Activated naive CD4-positive, alpha-beta T cell treated with anti-CD3 and anti-CD28 coated beads for 36 hours (primary cell): ENCODE measurements at regions of chr1 and their contacts with region 1.

Region 1: DNA sequence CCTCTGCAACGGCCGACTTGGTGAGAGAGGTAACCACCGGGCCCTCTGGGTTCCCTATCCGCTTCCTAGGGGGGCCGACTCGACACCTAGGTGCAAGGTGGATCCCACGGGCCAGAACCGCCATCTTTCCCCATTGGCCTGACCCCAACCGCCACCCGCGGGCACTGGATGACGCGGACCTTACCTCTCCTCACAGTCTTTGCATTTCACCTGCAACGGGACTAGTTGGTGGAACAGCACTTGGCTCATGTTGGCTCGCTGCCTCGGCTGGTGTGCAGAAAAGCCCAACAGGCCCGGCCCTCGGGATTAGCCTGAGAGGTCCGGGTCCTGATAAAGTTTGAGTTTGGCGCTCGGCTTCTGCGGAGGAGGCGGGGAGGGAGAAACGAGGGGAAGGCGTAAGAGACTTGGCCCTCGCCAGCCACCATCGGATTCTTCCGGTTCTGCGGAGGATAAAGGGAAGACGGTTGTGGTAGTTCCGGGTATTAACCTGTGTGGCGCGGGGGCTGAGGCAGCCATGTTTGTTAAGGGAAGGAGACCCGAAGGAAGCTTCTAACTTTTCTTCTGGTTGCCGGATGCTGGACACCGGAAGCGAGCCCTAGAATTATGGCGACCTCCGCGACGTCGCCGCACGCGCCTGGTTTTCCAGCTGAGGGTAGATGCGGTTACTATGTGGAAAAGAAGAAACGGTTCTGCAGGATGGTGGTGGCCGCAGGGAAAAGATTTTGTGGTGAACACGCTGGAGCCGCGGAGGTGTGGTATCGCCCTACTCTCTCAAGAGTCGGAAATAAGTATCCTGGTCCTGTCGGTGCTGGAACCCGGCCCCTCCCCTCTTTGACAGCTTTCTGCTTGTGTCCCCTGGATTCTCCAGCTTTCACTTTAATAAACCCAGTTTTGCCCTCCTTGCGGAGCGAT is at the starts of genes SASS6 and TRMT13:
- DNase-seq: peak; percentile 97
- H3K4me3 Mint-ChIP-seq: peak within 1 kb of the TSS; percentile 91
- H3K27ac Mint-ChIP-seq: peak within 1 kb of the TSS; percentile 87
- H3K4me1 Mint-ChIP-seq: peaks cover 37% of the 10 kb centered on the region
- H3K27me3 Mint-ChIP-seq: no peaks in the 10 kb centered on the region
- total RNA-seq, gene SASS6: 8.2 TPM
- total RNA-seq, gene TRMT13: 12.9 to 16.6 TPM

Region 2: DNA sequence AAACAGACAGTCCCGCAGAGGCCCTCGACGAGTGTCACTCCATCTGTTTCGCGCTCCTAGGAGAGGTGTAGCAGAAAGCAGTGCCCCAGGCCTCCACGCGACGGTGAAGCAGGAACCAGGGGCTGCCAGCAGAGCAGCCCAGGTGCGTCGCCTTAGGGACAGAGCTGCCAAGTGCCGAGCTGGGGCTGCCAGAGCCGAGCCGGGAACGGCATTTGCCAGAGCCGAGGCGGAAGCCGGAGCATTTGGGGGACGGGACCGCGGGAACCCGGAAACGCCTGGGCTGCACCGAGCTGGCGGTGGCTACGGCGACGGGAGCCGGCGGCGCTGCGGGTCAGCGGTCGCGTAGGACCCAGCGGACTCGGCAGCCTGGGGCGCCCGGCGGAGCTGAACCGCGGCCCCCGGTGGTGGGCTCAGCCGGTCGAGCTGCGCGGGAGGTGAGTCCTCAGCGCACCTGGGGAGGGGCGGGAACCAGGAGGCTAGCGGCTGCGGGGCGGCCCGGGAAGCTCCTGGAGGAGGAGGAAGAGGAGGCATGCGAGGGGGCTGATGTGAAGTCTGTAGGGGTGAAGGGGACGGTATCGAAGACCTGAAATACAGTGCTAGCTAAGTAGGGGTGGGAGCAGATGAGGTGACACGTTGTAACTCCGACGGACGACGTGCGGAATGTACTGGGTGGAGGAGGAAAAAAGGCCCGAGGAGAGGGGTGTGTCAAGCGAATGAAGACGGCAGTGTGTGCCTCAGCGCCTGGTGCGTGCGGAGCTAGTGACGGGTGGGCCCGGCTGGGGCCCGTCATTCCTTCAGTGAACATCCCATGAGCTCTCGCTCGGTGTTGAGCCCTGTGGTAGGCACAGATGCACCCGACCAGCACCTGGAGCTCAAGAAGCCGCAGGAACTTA is 162.8 kb before region 1 on chr1 and contains the start of gene SLC35A3:
- CTCF ChIA-PET with region 1: no interaction called
- intact Hi-C with region 1: loop called (anchors 1 kb)
- DNase-seq: peak; percentile 85
- H3K4me3 Mint-ChIP-seq: peak within 1 kb of the TSS; percentile 96
- H3K27ac Mint-ChIP-seq: peak within 1 kb of the TSS; percentile 85
- H3K4me1 Mint-ChIP-seq: peaks cover 22% of the 10 kb centered on the region
- H3K27me3 Mint-ChIP-seq: no peaks in the 10 kb centered on the region
- total RNA-seq, gene SLC35A3: 13.8 to 15.5 TPM

Region 3: GRCh38 chr1:100051401-100051800 is 81.4 kb before region 1 on chr1:
- CTCF ChIA-PET with region 1: no interaction called
- intact Hi-C with region 1: loop called (anchors 2 kb)
- DNase-seq: no peak
- H3K4me3 Mint-ChIP-seq: no peak overlapping the region
- H3K27ac Mint-ChIP-seq: peak overlapping the region; percentile 66
- H3K4me1 Mint-ChIP-seq: peaks cover 59% of the 10 kb centered on the region
- H3K27me3 Mint-ChIP-seq: no peaks in the 10 kb centered on the region

Region 4: GRCh38 chr1:100328133-100328532 is 195.3 kb after region 1 on chr1:
- CTCF ChIA-PET with region 1: no interaction called
- intact Hi-C with region 1: no loop called
- DNase-seq: no peak
- H3K4me3 Mint-ChIP-seq: no peak overlapping the region
- H3K27ac Mint-ChIP-seq: no peak overlapping the region
- H3K4me1 Mint-ChIP-seq: peaks cover 4% of the 10 kb centered on the region
- H3K27me3 Mint-ChIP-seq: no peaks in the 10 kb centered on the region

Region 5: DNA sequence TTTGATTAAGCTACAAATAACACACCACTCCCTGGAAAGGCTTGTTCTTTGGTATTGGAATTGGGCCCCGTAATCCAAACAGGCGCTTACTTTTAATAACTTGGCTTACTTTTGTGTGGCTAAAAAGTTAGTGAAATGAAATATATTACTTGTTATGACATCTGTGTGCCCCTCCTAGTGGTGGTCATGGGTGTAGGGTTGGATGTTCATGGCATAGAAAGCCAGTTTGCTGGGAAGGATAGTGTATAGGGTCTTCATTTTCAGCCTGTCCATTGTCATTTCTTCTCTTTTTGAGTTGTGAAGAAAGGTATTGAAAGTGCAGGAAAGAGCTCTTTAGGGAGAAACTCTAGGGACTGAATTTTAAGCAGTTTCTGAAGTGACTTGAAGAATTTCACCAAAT is 225.4 kb after region 1 on chr1:
- CTCF ChIA-PET with region 1: no interaction called
- intact Hi-C with region 1: no loop called
- DNase-seq: peak; percentile 46
- H3K4me3 Mint-ChIP-seq: no peak overlapping the region
- H3K27ac Mint-ChIP-seq: no peak overlapping the region
- H3K4me1 Mint-ChIP-seq: peaks cover 81% of the 10 kb centered on the region
- H3K27me3 Mint-ChIP-seq: no peaks in the 10 kb centered on the region